Activated B cell treated with CpG ODN at 0.5 μM for 24 hours (primary cell): ENCODE measurements at regions of chr17 and their contacts with region 1.

Region 1: GRCh38 chr17:43483674-43484372 is at the start of gene DHX8:
- DNase-seq: peak; percentile 99
- ATAC-seq: peak; percentile 97
- H3K4me3 Mint-ChIP-seq: peak within 1 kb of the TSS; percentile 94
- H3K27ac Mint-ChIP-seq: peak within 1 kb of the TSS; percentile 89
- H3K4me1 Mint-ChIP-seq: peaks cover 36% of the 10 kb centered on the region
- H3K27me3 Mint-ChIP-seq: no peaks in the 10 kb centered on the region
- CTCF ChIP-seq: peak; percentile 98
- total RNA-seq, gene DHX8: 60.6 and 63.4 TPM in 2 replicates

Region 2: DNA sequence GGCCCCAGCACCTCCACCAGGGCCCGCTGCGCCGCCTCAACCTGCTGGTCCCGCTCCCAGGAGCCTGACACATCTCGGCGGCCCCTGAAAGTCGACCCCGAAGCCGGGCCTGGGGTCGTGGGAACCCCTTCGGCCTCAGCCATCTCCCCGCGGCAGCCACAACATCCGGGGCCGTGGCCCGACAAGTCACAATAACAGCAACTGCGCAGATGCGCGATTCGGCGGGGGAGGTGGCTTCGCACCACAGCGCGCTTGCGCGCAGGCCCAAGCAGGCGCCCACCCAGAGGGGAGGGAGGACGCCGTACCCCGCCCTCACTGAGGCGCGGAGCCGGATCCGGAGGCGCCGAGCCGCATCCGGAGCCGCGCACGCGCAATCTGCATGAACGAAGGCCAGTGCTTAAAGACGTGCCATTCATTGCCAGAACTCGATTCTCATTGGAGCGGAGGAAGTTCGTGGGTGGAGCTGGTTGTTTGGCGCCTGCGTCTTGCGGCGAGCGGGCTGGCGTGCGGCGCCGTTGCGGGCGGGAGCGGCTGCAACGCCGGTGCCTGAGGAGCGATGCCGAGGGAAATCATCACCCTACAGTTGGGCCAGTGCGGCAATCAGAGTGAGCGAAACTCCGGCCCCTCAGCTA is 874.5 kb before region 1 on chr17 and contains the starts of genes RETREG3 and TUBG1:
- CTCF ChIA-PET with region 1: no interaction called
- POLR2A ChIA-PET with region 1: interaction called, 10 read pairs
- intact Hi-C with region 1: no loop called
- DNase-seq: peak; percentile 98
- ATAC-seq: peak; percentile 90
- H3K4me3 Mint-ChIP-seq: peak within 1 kb of the TSS; percentile 100
- H3K27ac Mint-ChIP-seq: peak within 1 kb of the TSS; percentile 98
- H3K4me1 Mint-ChIP-seq: peaks cover 47% of the 10 kb centered on the region
- H3K27me3 Mint-ChIP-seq: no peaks in the 10 kb centered on the region
- CTCF ChIP-seq: no peak
- total RNA-seq, gene RETREG3: 60.0 and 63.5 TPM in 2 replicates
- total RNA-seq, gene TUBG1: 25.0 and 26.8 TPM in 2 replicates

Region 3: GRCh38 chr17:42964161-42964932 is 519.5 kb before region 1 on chr17 and contains the start of gene AARSD1:
- CTCF ChIA-PET with region 1: no interaction called
- POLR2A ChIA-PET with region 1: no interaction called
- intact Hi-C with region 1: no loop called
- DNase-seq: peak; percentile 79
- ATAC-seq: peak; percentile 94
- H3K4me3 Mint-ChIP-seq: peak within 1 kb of the TSS; percentile 97
- H3K27ac Mint-ChIP-seq: peak within 1 kb of the TSS; percentile 87
- H3K4me1 Mint-ChIP-seq: peaks cover 14% of the 10 kb centered on the region
- H3K27me3 Mint-ChIP-seq: no peaks in the 10 kb centered on the region
- CTCF ChIP-seq: no peak
- total RNA-seq, gene AARSD1: 63.6 and 70.4 TPM in 2 replicates

Region 4: DNA sequence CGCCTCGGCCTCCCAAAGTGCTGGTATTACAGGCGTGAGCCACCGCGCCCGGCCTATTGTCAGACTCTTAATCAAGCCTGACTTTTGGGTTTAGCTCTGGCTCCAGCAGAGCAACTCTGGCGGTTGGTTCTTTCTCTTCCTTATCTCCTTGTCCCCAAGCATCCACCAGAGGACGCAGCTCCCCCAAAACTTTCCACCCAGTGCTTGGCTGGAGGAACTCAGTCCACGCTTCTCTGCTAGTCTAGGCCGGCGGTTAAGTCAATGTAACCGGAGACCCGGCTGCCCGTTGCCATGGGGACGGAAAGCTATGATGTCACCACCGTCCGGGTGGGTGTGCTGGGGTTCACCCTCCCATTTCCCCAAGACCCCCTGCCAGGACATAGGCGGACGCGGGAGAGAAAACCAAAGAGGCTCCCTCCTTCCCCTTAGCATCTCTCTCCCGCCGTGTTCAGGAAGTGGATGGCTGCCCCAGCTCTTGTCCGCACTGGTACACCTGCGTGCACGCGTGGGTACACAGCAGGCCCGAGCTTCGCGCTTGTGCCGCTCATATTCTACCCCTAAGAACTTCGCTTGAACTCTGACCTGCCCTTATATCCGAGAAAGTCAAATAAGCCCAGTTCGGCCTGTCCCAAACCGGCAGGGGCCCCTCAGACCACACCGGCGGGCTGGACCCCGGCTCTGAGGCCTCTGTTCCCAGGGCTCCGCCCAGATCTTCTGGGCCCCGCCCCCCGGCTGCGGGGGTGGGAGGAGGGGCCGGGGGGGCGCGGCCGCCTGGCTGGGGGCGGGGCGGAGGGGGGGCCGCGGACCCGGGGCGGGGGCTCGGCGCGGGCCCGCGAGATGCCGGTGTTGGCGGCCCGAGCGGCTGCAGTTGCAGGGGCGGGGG is 459.2 kb before region 1 on chr17 and contains the start of gene RND2:
- CTCF ChIA-PET with region 1: no interaction called
- POLR2A ChIA-PET with region 1: interaction called, 7 read pairs
- intact Hi-C with region 1: loop called (anchors 1 kb)
- DNase-seq: peak; percentile 79
- ATAC-seq: peak; percentile 65
- H3K4me3 Mint-ChIP-seq: peak within 1 kb of the TSS; percentile 92
- H3K27ac Mint-ChIP-seq: peak within 1 kb of the TSS; percentile 87
- H3K4me1 Mint-ChIP-seq: peaks cover 24% of the 10 kb centered on the region
- H3K27me3 Mint-ChIP-seq: no peaks in the 10 kb centered on the region
- CTCF ChIP-seq: no peak
- total RNA-seq, gene RND2: 0.05 and 0.13 TPM in 2 replicates

Region 5: GRCh38 chr17:43170766-43171585 is 312.8 kb before region 1 on chr17 and contains the start of gene NBR1:
- CTCF ChIA-PET with region 1: interaction called, 3 read pairs
- POLR2A ChIA-PET with region 1: interaction called, 8 read pairs
- intact Hi-C with region 1: loop called (anchors 1 kb)
- DNase-seq: peak; percentile 86
- ATAC-seq: peak; percentile 74
- H3K4me3 Mint-ChIP-seq: no peak within 1 kb of the TSS
- H3K27ac Mint-ChIP-seq: no peak within 1 kb of the TSS
- H3K4me1 Mint-ChIP-seq: peaks cover 13% of the 10 kb centered on the region
- H3K27me3 Mint-ChIP-seq: no peaks in the 10 kb centered on the region
- CTCF ChIP-seq: no peak
- total RNA-seq, gene NBR1: 42.2 and 44.8 TPM in 2 replicates

Region 6: GRCh38 chr17:43360739-43361505 is 122.9 kb before region 1 on chr17:
- CTCF ChIA-PET with region 1: interaction called, 3 read pairs
- POLR2A ChIA-PET with region 1: interaction called, 68 read pairs
- intact Hi-C with region 1: loop called (anchors 1 kb)
- DNase-seq: peak; percentile 65
- ATAC-seq: peak; percentile 76
- H3K4me3 Mint-ChIP-seq: peak overlapping the region; percentile 93
- H3K27ac Mint-ChIP-seq: peak overlapping the region; percentile 100
- H3K4me1 Mint-ChIP-seq: peaks cover 15% of the 10 kb centered on the region
- H3K27me3 Mint-ChIP-seq: peaks cover 2% of the 10 kb centered on the region
- CTCF ChIP-seq: no peak

Region 7: GRCh38 chr17:43388359-43389045 is 95.3 kb before region 1 on chr17:
- CTCF ChIA-PET with region 1: interaction called, 110 read pairs
- POLR2A ChIA-PET with region 1: interaction called, 111 read pairs
- intact Hi-C with region 1: loop called (anchors 1 kb)
- DNase-seq: peak; percentile 94
- ATAC-seq: peak; percentile 76
- H3K4me3 Mint-ChIP-seq: peak overlapping the region; percentile 88
- H3K27ac Mint-ChIP-seq: peak overlapping the region; percentile 96
- H3K4me1 Mint-ChIP-seq: peaks cover 38% of the 10 kb centered on the region
- H3K27me3 Mint-ChIP-seq: no peaks in the 10 kb centered on the region
- CTCF ChIP-seq: no peak

Region 8: DNA sequence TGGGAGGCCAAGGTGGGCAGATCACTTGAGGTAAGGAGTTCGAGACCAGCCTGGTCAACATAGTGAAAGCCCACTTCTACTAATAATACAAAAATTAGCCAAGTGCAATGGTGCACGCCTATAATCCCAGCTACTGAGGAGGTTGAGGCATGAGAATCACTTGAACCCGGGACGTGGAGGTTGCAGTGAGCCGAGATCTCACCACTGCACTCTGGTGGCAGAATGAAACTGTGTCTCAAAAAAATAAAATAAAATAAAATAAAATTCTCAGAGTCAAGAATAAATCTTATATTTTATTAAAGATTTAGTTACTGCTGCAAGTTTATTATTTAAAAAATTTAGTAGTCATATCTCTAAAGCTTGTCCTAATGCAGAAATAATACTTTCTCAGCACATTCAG is 55.3 kb before region 1 on chr17:
- CTCF ChIA-PET with region 1: no interaction called
- POLR2A ChIA-PET with region 1: interaction called, 10 read pairs
- intact Hi-C with region 1: no loop called
- DNase-seq: no peak
- ATAC-seq: no peak
- H3K4me3 Mint-ChIP-seq: no peak overlapping the region
- H3K27ac Mint-ChIP-seq: no peak overlapping the region
- H3K4me1 Mint-ChIP-seq: no peaks in the 10 kb centered on the region
- H3K27me3 Mint-ChIP-seq: peaks cover 12% of the 10 kb centered on the region
- CTCF ChIP-seq: no peak

Region 9: GRCh38 chr17:43449470-43450248 is 34.2 kb before region 1 on chr17:
- CTCF ChIA-PET with region 1: no interaction called
- POLR2A ChIA-PET with region 1: no interaction called
- intact Hi-C with region 1: no loop called
- DNase-seq: no peak
- ATAC-seq: no peak
- H3K4me3 Mint-ChIP-seq: no peak overlapping the region
- H3K27ac Mint-ChIP-seq: no peak overlapping the region
- H3K4me1 Mint-ChIP-seq: no peaks in the 10 kb centered on the region
- H3K27me3 Mint-ChIP-seq: peaks cover 9% of the 10 kb centered on the region
- CTCF ChIP-seq: no peak